ENCODE measurements at regions of chr6 and their contacts with region 1.

Region 1: DNA sequence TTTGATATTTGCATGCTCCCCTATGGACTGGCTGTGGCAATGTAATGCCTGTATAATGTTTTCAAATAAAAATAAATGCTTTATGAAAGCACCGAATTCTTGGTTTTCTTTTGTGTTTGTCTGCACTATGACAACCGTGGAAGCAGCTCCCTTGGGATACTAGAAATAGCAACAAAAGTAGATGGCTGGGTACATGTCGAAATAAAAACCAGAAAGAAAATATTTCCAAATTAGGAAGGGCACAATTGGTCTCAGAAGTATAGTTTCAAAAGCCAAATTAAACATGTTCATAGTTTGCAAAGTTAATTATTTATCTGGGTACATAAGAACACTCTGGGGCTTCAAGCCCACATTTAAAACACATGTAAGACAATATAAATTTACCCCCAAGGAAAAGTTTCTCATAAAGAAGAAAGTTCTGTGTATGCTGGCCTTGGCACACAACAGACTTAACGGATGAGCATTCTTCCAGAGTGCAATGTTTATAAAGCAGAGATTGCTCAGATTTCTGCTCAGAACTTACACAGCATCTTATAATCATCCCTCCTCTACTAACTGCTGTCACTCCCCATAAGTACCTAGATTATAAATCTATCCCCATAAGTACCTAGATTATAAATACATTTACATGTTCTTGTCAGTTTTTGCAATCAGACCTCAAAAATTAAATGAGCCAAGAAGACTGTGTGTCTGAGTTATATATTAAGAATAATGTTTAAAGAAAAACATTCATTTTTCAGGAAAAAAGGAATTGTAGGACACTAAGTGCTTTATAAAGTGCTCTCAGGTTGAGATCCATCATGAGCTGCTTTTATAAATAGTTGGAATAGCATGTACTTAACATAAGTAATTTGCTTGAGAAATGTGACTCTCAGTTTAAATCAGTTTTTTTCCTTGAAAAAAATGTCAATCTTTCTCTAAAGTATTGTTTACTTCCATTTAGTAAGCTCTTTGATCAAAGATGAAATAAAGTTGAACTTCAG is 230.2 kb upstream of the PLN start:
- DNase-seq: no peak
- ATAC-seq: peak; percentile 78
- H3K4me3 ChIP-seq: no peak overlapping the region
- H3K27ac ChIP-seq: peak overlapping the region; percentile 64 to 95
- H3K4me1 ChIP-seq: peaks cover 2 to 6% of the 10 kb centered on the region in 2 donors
- H3K27me3 ChIP-seq: no peaks in the 10 kb centered on the region

Region 2: DNA sequence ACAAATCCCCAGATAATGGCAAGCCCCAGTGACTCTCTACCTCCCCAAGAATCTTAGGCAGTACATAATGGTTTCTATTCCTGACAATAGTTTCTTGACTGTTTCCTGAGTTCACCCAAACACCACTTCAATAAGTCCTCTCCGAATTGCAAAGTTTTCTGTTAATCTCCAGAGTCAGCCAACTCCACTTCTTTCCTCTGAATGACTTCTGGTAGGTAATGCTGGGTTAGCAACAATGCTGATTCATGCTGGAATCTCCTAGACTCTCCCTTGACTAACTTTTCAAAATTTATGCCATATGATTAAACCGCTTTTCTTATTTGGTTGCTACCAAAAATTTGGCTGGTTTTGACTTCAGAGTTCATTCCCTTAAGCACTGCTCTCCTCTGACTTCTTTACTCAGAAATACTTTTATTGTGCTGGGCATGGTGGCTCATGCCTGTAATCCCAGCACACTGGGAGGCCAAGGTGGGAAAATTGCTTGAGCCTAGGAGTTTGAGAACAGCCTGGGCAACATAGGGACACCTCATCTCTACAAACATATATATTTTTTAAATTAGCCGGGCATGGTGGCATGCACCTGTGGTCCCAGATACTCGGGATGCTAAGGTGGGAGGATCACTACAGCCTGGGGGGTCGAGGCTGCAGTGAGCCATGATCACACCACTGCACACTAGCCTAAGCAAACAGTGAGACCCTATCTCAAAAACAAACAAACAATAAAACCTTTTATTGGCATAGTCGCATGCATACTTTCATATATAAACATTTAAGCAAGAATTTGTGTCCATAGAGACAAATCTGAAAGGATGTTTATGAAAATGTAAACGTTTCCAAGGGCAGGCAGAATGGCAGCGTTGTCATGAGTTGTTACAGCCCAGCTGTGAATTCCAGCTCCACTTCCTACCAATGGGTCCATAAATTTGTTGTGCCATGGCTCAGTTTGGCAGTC is 19.1 kb before region 1 on chr6:
- intact Hi-C with region 1: loop called in 1 of 2 experiments (anchors 1 kb)
- DNase-seq: no peak
- ATAC-seq: peak; percentile 2
- H3K4me3 ChIP-seq: no peak overlapping the region
- H3K27ac ChIP-seq: peak overlapping the region; percentile 88 to 91
- H3K4me1 ChIP-seq: peaks cover 5 to 6% of the 10 kb centered on the region in 2 donors
- H3K27me3 ChIP-seq: no peaks in the 10 kb centered on the region

Measured in aorta (tissue), 5 donors.